Ascending aorta (tissue), 2 donors: ENCODE measurements at regions of chr3 and their contacts with region 1.

Region 1: GRCh38 chr3:105366326-105367062 is at the start of gene ALCAM:
- DNase-seq: peak; percentile 94 to 98
- H3K4me3 ChIP-seq: peak within 1 kb of the TSS; percentile 82 to 88
- H3K27ac ChIP-seq: peak within 1 kb of the TSS; percentile 91 to 96
- H3K4me1 ChIP-seq: peaks cover 0 to 29% of the 10 kb centered on the region in 2 donors
- H3K27me3 ChIP-seq: no peaks in the 10 kb centered on the region
- CTCF ChIP-seq: peak; percentile 69 to 82 (median 81)
- total RNA-seq, gene ALCAM: 26.1 TPM

Region 2: DNA sequence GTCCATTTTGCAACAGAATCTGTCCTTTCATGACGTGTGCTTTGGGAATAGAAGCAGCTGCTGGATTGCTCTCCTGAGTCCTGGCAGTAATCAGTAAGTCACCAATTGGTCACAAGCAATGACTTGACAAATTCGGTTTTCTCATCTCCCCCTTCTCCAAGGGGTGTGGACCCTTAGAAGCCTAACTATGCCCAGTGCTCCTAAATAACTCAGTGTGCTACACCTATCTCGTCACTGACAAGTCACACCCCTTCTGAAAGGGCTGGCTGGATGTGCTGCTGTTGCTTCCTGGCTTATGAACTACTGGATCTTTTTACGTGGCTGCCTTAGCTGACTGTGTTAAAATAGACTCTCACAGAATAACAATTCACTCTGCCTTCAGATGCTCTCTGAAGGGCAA is 1580.2 kb before region 1 on chr3:
- intact Hi-C with region 1: no loop called
- DNase-seq: no peak
- H3K4me3 ChIP-seq: no peak overlapping the region
- H3K27ac ChIP-seq: no peak overlapping the region
- H3K4me1 ChIP-seq: no peaks in the 10 kb centered on the region
- H3K27me3 ChIP-seq: no peaks in the 10 kb centered on the region
- CTCF ChIP-seq: no peak

Region 3: GRCh38 chr3:104367000-104367399 is 999.5 kb before region 1 on chr3:
- intact Hi-C with region 1: loop called (anchors 10 kb)
- DNase-seq: no peak
- H3K4me3 ChIP-seq: no peak overlapping the region
- H3K27ac ChIP-seq: no peak overlapping the region
- H3K4me1 ChIP-seq: no peaks in the 10 kb centered on the region
- H3K27me3 ChIP-seq: no peaks in the 10 kb centered on the region
- CTCF ChIP-seq: no peak

Region 4: GRCh38 chr3:104596551-104596950 is 769.9 kb before region 1 on chr3:
- intact Hi-C with region 1: loop called (anchors 2 kb)
- DNase-seq: no peak
- H3K4me3 ChIP-seq: no peak overlapping the region
- H3K27ac ChIP-seq: no peak overlapping the region
- H3K4me1 ChIP-seq: no peaks in the 10 kb centered on the region
- H3K27me3 ChIP-seq: no peaks in the 10 kb centered on the region
- CTCF ChIP-seq: peak in 1 of 3 experiments; percentile 48

Region 5: GRCh38 chr3:105222568-105223093 is 143.9 kb before region 1 on chr3:
- intact Hi-C with region 1: no loop called
- DNase-seq: no peak
- H3K4me3 ChIP-seq: no peak overlapping the region
- H3K27ac ChIP-seq: no peak overlapping the region
- H3K4me1 ChIP-seq: no peaks in the 10 kb centered on the region
- H3K27me3 ChIP-seq: no peaks in the 10 kb centered on the region
- CTCF ChIP-seq: no peak

Region 6: GRCh38 chr3:105402287-105402801 is 35.9 kb after region 1 on chr3:
- intact Hi-C with region 1: no loop called
- DNase-seq: no peak
- H3K4me3 ChIP-seq: no peak overlapping the region
- H3K27ac ChIP-seq: no peak overlapping the region
- H3K4me1 ChIP-seq: no peaks in the 10 kb centered on the region
- H3K27me3 ChIP-seq: no peaks in the 10 kb centered on the region
- CTCF ChIP-seq: no peak

Region 7: DNA sequence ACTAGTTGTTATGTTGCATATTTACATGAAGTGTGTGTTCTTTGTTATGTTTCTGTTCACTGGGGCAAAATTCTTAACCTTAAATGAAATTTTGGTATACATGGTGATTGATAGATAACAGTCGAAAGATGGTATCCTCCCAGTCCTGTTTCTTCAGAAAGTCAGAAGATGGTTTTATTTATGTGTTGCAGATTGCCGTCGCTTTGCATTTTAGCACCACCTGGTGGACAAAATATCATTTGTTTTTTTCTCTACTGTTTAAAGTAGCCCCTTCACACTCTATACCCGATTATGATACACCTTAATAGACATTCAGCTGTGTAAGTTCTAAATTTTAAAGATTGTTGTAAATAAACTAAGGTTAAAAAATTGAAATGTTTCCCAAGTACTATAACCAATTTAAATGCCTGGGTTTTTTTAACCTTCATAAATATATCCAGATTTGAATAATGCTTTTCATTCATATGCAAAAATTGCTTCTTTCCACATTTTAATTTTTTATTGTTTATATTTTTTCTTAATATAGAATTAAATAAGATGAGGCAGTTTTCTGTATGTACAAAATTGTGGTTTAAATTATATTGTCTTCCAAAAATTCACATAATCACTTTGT is 152.4 kb after region 1 on chr3:
- intact Hi-C with region 1: loop called (anchors 5 kb)
- DNase-seq: no peak
- H3K4me3 ChIP-seq: no peak overlapping the region
- H3K27ac ChIP-seq: no peak overlapping the region
- H3K4me1 ChIP-seq: peaks cover 0 to 4% of the 10 kb centered on the region in 2 donors
- H3K27me3 ChIP-seq: no peaks in the 10 kb centered on the region
- CTCF ChIP-seq: peak; percentile 40 to 72 (median 46)

Region 8: GRCh38 chr3:105906836-105907235 is 540.3 kb after region 1 on chr3:
- intact Hi-C with region 1: loop called (anchors 5 kb)
- DNase-seq: peak; percentile 29 to 90
- H3K4me3 ChIP-seq: no peak overlapping the region
- H3K27ac ChIP-seq: peak overlapping the region; percentile 86 to 91
- H3K4me1 ChIP-seq: peaks cover 11 to 30% of the 10 kb centered on the region in 2 donors
- H3K27me3 ChIP-seq: no peaks in the 10 kb centered on the region
- CTCF ChIP-seq: no peak

Region 9: GRCh38 chr3:105923150-105923549 is 556.7 kb after region 1 on chr3:
- intact Hi-C with region 1: no loop called
- DNase-seq: no peak
- H3K4me3 ChIP-seq: no peak overlapping the region
- H3K27ac ChIP-seq: no peak overlapping the region
- H3K4me1 ChIP-seq: no peaks in the 10 kb centered on the region
- H3K27me3 ChIP-seq: no peaks in the 10 kb centered on the region
- CTCF ChIP-seq: no peak